ENCODE measurements at regions of chr22 and their contacts with region 1.

Region 1: DNA sequence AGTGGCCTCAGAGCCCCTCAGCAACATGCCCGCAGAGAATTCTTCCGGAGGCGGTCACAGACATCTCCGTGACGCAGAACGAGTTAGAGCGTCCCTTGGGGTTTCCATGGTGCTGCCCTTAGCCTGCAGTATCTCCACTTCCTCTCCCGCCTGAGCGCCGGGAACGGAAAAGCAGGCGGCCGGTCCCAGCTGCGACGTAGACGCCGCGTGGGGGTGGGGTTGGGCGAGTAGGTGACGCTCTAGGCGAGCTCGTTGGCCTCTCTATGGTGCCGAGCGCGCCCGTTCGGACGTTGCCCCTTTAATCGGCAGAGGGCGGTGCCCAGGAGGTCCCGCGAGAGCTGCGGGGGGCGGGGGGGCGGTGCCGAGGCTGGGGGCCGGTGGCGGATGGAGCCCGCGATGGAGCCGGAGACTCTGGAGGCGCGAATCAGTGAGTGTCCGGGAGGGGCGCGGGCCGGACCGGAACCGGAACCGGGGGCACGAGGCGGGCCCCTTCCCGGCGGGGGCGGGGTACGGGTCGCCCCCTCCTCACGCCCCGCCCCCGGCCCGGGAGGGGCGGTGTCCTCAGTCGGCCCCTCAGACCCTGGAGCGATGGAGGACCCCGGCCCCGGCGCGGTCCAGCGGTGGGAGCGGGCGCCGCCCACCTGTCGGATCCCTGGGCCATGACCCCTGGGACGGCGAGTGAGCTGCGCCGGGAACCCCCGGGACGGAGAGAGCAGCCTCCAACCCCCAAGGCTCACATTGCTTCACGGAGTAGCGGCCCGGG is at the start of gene GGA1:
- DNase-seq: peak; percentile 97
- H3K4me3 ChIP-seq: peak within 1 kb of the TSS; percentile 86 to 91
- H3K27ac ChIP-seq: peak within 1 kb of the TSS; percentile 92 to 98
- H3K4me1 ChIP-seq: peaks cover 7 to 26% of the 10 kb centered on the region in 2 experiments; a peak in 1 of 4 replicates
- H3K27me3 ChIP-seq: no peaks in the 10 kb centered on the region
- CTCF ChIP-seq: no peak
- EP300 ChIP-seq: no peak; a peak in 1 of 4 replicates
- RAD21 ChIP-seq: no peak
- polyA plus RNA-seq, gene GGA1: 81.1 and 99.4 TPM in 2 replicates

Region 2: DNA sequence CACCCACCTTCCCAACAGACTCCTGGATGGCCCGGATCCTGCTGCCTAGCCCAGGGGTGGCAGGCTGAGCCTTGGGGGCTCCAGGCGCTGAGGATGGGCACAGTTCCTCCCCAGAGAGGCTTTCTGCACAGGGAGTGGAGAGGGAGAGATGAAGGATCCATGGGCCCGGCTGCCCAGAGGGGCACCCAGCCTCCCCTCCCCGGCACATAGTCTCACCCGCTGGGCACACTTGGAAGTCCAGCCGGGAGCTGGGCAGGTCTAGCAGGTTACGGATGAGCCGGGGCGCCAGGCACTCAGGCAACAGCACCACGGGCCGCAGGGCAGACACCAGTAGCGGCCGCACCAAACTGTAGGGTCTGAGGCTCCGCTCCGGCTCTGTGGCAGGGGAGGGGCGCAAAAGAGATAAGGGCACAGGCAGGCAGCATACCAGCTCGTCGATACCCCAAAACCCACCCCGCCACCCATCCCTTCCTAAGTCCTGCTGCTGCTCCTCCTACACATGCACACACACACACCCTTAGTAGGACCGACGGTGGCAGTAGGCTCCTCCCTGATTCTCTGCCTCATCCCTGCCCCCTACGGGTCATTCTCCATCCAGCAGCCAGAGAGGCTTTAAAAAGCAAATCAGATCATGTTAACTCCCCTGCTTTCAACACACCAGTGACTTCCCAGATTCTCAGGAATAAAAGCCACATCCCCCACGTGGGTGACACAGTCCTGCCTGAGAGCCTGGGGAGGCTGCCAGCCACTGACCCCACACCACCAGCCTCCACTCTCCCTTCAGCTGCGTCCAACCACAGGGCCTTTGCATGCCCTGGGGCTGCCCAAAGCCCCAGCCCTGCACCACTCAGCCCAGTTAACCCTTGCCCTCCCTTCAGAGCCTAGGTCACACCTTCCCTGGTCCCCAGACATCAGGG is 116.0 kb before region 1 on chr22:
- CTCF ChIA-PET with region 1: no interaction called
- POLR2A ChIA-PET with region 1: no interaction called
- DNase-seq: peak; percentile 69
- H3K4me3 ChIP-seq: no peak overlapping the region; a peak in 1 of 4 replicates
- H3K27ac ChIP-seq: no peak overlapping the region
- H3K4me1 ChIP-seq: peaks cover 6% of the 10 kb centered on the region in 2 experiments; a peak in 2 of 4 replicates
- H3K27me3 ChIP-seq: no peaks in the 10 kb centered on the region
- CTCF ChIP-seq: peak; percentile 57
- EP300 ChIP-seq: no peak
- RAD21 ChIP-seq: 0 out of 2 replicates have a peak, but pooled peaks have one; percentile 11

Region 3: GRCh38 chr22:37538590-37539357 is 69.9 kb before region 1 on chr22:
- CTCF ChIA-PET with region 1: interaction called, 10 read pairs
- POLR2A ChIA-PET with region 1: no interaction called
- DNase-seq: peak; percentile 93
- H3K4me3 ChIP-seq: peak overlapping the region in 1 of 2 experiments; percentile 40; a peak in 1 of 4 replicates
- H3K27ac ChIP-seq: no peak overlapping the region
- H3K4me1 ChIP-seq: peaks cover 10 to 11% of the 10 kb centered on the region in 2 experiments; a peak in 3 of 4 replicates
- H3K27me3 ChIP-seq: no peaks in the 10 kb centered on the region
- CTCF ChIP-seq: peak; percentile 98
- EP300 ChIP-seq: no peak
- RAD21 ChIP-seq: peak; percentile 100

Region 4: DNA sequence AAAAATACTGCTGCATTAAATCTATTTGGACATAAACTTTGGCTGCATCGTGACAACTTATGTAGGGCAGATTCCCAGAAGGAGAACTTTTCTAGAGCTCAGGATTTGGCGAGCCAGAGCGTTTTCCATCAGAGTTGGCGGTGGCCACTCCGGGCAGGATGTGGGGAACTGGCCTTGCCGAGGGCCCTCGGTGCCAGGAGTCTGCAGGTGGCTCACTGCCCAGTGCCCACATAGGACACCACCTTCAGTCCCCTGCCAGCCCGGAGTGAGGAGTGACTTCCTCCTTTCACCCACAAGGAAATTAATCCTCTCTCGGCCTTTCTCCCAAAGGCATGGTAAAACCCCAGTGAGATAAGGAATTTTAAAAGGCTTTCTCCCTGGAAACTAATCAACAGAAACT is 27.2 kb before region 1 on chr22:
- CTCF ChIA-PET with region 1: interaction called, 21 read pairs
- POLR2A ChIA-PET with region 1: interaction called, 4 read pairs
- DNase-seq: no peak
- H3K4me3 ChIP-seq: no peak overlapping the region
- H3K27ac ChIP-seq: no peak overlapping the region
- H3K4me1 ChIP-seq: no peaks in the 10 kb centered on the region; a peak in 2 of 4 replicates
- H3K27me3 ChIP-seq: no peaks in the 10 kb centered on the region
- CTCF ChIP-seq: no peak
- EP300 ChIP-seq: no peak
- RAD21 ChIP-seq: no peak

Region 5: DNA sequence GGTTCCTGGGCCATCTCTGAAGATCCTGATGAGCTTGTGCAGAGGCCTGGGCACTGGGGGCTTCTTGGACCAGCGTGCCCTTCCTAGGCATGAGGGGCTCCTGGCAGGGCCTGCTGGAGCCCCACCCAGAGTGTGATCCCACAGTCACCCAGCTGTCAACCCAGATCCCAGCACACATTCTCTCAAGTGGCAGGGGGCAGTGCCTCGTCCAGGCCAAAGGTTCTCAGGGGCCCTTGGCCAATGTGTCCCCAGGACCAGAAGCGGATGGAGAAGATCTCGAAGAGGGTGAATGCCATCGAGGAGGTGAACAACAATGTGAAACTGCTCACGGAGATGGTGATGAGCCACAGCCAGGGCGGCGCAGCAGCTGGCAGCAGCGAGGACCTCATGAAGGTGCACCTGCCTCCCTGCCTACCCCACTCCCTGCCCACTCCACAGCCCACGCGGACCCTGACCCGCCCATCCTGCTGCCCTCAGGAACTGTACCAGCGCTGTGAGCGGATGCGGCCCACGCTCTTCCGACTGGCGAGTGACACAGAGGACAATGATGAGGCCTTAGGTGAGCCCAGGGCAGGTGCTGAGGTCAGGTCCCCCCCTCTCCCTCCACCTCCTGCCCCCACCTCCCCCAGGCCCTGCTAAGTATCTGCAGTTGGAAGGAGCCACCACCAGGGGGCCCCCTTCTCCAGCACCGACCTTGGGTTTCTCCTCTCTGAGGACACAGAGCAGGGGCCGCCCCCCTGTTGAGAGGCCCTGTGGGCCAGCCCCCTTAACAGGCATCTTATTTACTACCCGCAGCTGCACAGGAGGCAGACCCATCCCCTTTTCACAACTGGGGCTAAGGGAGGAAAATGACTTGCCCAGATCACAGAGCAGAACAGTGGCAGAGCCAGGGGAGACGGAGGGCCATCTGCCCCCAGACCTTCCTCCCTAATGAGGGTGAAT is 14.7 kb after region 1 on chr22:
- CTCF ChIA-PET with region 1: interaction called, 54 read pairs
- POLR2A ChIA-PET with region 1: interaction called, 6 read pairs
- DNase-seq: peak; percentile 94
- H3K4me3 ChIP-seq: no peak overlapping the region
- H3K27ac ChIP-seq: peak overlapping the region in 1 of 2 experiments; percentile 56; a peak in 1 of 4 replicates
- H3K4me1 ChIP-seq: peaks cover 0 to 4% of the 10 kb centered on the region in 2 experiments; a peak in 1 of 4 replicates
- H3K27me3 ChIP-seq: no peaks in the 10 kb centered on the region
- CTCF ChIP-seq: peak; percentile 89
- EP300 ChIP-seq: no peak
- RAD21 ChIP-seq: peak; percentile 65

Region 6: GRCh38 chr22:37643225-37643847 is 34.7 kb after region 1 on chr22:
- CTCF ChIA-PET with region 1: interaction called, 17 read pairs
- POLR2A ChIA-PET with region 1: interaction called, 3 read pairs
- DNase-seq: peak; percentile 91
- H3K4me3 ChIP-seq: peak overlapping the region in 1 of 2 experiments; percentile 42; a peak in 1 of 4 replicates
- H3K27ac ChIP-seq: no peak overlapping the region; a peak in 1 of 4 replicates
- H3K4me1 ChIP-seq: peaks cover 4 to 26% of the 10 kb centered on the region in 2 experiments; a peak in 2 of 4 replicates
- H3K27me3 ChIP-seq: no peaks in the 10 kb centered on the region
- CTCF ChIP-seq: peak; percentile 90
- EP300 ChIP-seq: no peak
- RAD21 ChIP-seq: peak; percentile 76

Region 7: DNA sequence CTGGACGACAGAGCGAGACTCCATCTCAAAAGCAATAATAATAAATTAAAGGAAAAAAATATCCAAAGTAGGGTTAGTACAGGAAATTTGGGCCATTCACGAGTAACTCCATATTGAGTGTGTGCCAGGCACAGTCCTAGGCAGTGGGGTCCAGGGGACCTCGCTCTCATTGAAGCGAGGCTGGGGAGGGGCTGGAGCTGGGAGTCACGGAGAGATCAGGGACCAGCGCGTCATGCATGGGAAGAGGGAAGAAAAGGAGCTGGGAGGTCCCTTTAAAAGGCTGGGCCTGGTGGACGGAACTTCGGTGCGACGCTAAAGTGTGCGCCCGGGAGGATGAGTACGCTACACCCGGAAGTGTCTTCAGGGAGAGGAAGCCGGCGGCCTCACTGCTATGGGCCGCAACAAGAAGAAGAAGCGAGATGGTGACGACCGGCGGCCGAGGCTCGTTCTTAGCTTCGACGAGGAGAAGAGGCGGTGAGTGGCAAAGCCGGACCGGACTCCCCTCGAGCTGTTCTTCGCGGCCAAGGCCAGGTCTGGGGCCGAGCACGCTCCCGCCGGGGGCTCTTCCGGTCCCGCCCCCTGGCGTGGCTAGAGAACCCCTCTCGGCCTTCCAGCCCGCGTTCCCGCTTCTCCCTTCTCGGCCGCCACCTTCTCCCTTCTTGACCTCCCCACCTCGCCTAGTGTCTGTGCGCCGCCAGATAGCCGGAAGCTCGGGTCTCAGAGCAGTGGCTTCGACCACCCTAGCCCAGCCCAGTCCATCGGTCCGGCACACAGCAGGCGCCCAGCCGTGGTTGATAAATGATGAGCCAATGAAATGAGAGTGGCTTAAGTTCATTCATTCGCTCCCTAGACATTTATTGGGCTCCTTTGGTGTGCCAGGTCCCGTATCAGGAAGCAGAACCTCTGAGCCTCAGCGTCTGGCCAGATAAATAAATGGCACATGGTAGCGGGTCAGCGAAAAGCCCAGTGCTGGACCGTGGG is 77.6 kb after region 1 on chr22 and contains the start of gene NOL12:
- CTCF ChIA-PET with region 1: interaction called, 15 read pairs
- POLR2A ChIA-PET with region 1: interaction called, 13 read pairs
- DNase-seq: peak; percentile 91
- H3K4me3 ChIP-seq: peak within 1 kb of the TSS; percentile 79 to 91
- H3K27ac ChIP-seq: peak within 1 kb of the TSS; percentile 84 to 90
- H3K4me1 ChIP-seq: peaks cover 2 to 9% of the 10 kb centered on the region in 2 experiments; a peak in 2 of 4 replicates
- H3K27me3 ChIP-seq: no peaks in the 10 kb centered on the region
- CTCF ChIP-seq: no peak
- EP300 ChIP-seq: no peak
- RAD21 ChIP-seq: no peak
- polyA plus RNA-seq, gene NOL12: 48.2 and 52.2 TPM in 2 replicates